K562 (cell line): ENCODE measurements at regions of chr9 and their contacts with region 1.

Region 1: DNA sequence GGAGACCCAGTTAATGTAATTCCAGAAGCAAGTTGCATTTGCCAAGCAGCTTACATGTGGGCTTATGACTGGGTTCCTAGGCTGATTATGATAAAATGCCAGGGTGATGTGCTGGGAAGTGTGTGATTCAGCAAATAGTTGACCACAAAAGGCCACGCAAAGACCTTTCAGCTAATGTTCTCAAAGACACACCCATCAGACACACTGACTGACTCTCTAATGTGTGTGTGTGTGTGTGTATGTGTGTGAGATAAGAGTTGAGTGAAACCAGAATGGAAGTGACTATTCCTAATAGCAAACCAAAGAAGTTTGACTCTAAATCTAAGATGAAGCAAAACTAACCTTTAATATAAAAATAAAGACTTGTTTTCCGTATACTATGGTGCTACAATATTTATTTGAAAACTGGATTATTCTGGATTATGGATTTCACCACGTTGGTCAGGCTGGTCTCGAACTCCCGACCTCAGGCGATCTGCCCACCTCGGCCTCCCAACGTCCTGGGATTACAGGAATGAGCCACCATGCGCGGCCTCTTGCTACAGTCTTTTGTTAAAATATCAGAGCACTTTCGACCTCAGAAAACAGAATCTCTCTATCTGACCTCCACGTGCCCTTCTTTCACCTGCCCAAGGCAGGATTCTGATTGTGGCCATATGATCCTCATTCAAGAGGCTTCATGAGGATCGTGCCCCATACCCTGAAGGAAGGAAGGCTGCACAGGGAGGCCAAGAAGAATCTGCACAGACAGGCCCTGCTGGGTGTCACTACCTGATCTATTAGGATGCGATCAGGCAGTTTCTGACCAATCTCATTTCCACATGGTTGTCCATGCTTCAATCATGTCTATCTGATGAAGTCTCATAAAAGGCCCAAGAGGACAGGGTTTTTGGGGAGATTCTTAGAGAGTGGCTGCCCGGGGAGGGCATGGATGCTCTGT is 75.6 kb downstream of the USP20 start:
- DNase-seq: peak; percentile 80 to 94 (median 84)
- ATAC-seq: peak; percentile 99
- H3K4me3 ChIP-seq: no peak overlapping the region
- H3K27ac ChIP-seq: 0 out of 3 replicates have a peak overlapping the region, but pooled peaks have one; percentile 0
- H3K4me1 ChIP-seq: peaks cover 9 to 14% of the 10 kb centered on the region in 2 experiments; a peak in 4 of 5 replicates
- H3K27me3 ChIP-seq: no peaks in the 10 kb centered on the region
- CTCF ChIP-seq: no peak
- EP300 ChIP-seq: peak; percentile 93
- POLR2A ChIP-seq: no peak
- RAD21 ChIP-seq: no peak; a peak in 1 of 4 replicates

Region 2: DNA sequence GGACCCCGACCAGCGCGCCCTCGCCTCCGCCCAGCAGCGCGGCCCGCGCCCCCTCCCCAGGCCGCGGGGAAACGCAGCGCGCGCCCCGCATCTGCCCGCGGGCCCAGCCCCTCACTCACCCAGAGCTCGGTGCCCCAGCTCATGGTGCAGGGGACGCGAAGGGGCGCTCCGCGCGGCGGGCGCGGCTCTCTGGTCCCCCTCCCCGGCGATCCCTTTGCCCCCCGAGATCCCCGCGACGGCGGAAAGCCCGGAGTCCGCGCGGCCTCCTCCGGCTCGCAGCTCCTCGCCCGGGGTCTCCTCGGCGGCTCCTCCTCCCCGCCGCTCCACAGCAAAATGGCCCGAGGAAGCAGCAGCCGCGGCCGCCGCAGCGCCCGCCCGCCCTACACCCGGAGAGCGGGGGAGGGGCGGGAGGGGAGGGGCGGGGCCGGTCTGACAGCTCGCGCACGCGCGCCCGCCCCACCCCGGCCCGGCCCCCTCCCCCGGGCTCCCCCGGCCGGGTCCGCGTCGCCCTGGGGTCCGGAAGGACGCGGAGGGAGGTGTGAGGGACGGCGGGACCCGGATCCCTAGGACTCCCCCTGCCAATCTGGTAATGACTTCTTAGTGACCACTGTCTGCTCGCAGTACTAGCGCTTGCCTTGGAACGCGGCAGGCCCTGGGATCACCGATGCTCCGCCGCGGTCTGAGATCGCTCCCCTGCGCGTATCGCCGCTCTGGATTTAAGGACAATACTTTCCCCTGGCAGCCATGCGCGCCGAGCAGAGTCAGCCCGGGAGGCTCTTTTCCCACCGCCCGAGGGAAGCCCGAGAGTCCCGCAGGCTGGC is 132.1 kb after region 1 on chr9 and contains the start of gene FNBP1:
- CTCF ChIA-PET with region 1: no interaction called
- POLR2A ChIA-PET with region 1: no interaction called
- in situ Hi-C with region 1: no loop called
- intact Hi-C with region 1: loop called (anchors 2 kb)
- DNase-seq: peak; percentile 73 to 94 (median 91)
- ATAC-seq: peak; percentile 89
- H3K4me3 ChIP-seq: peak within 1 kb of the TSS; percentile 50
- H3K27ac ChIP-seq: peak within 1 kb of the TSS; percentile 34; the same call in 1 of the 3 replicates
- H3K4me1 ChIP-seq: peaks cover 27 to 32% of the 10 kb centered on the region in 2 experiments
- H3K27me3 ChIP-seq: peaks cover 5 to 12% of the 10 kb centered on the region in 2 experiments; a peak in 3 of 5 replicates
- CTCF ChIP-seq: 0 out of 6 replicates have a peak, but pooled peaks of 1 of the 3 experiments have one; percentile 3
- EP300 ChIP-seq: no peak
- POLR2A ChIP-seq: 0 out of 2 replicates have a peak, but pooled peaks have one; percentile 46
- RAD21 ChIP-seq: no peak
- polyA plus RNA-seq, gene FNBP1: 1.8 to 2.2 TPM